ENCODE measurements at regions of chr4 and their contacts with region 1.

Region 1: DNA sequence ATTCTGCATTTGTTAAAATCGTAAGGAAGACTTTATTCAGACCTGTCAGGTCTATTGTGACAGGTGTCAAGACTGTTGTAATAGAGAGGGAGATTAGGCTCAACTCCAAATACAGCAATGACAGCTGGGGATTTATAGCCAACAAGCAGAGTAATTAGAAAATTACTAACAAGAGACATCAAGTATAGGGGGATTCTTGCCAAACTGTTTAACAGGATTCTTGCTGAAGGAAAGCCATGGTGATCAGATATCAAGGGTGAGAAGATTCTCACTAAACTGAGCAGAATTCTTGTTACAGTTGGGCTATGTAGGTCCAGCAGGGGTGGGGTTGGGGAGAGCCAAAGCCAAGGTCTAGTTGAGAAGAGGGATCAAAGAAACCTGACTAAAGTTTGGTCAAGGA is 461.0 kb upstream of the GALNT7 start:
- DNase-seq: no peak
- H3K4me3 ChIP-seq: no peak overlapping the region
- H3K27ac ChIP-seq: no peak overlapping the region
- H3K4me1 ChIP-seq: no peaks in the 10 kb centered on the region
- H3K27me3 ChIP-seq: no peaks in the 10 kb centered on the region
- CTCF ChIP-seq: no peak
- POLR2A ChIP-seq: no peak

Region 2: DNA sequence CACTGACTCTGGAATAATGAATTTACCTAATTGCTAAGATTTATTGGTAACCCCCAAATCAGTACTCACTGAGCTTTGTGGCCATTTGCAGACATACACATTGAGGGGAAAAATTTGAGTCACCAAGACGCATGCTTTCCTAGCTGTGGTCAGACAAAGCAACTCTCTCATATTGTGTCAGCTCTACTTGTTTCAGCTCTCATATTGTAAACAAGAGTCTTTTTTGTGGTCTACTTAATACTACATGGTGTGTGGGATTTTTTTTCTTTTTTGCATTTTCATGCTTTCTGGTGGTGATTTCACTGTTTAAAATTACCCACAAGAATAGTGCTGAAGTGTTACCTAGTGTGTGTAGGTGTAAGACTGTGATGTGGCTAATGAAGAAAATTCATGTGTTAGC is 32.8 kb after region 1 on chr4:
- intact Hi-C with region 1: loop called (anchors 2 kb)
- DNase-seq: no peak
- H3K4me3 ChIP-seq: no peak overlapping the region
- H3K27ac ChIP-seq: no peak overlapping the region
- H3K4me1 ChIP-seq: no peaks in the 10 kb centered on the region
- H3K27me3 ChIP-seq: no peaks in the 10 kb centered on the region
- CTCF ChIP-seq: no peak
- POLR2A ChIP-seq: no peak

Region 3: DNA sequence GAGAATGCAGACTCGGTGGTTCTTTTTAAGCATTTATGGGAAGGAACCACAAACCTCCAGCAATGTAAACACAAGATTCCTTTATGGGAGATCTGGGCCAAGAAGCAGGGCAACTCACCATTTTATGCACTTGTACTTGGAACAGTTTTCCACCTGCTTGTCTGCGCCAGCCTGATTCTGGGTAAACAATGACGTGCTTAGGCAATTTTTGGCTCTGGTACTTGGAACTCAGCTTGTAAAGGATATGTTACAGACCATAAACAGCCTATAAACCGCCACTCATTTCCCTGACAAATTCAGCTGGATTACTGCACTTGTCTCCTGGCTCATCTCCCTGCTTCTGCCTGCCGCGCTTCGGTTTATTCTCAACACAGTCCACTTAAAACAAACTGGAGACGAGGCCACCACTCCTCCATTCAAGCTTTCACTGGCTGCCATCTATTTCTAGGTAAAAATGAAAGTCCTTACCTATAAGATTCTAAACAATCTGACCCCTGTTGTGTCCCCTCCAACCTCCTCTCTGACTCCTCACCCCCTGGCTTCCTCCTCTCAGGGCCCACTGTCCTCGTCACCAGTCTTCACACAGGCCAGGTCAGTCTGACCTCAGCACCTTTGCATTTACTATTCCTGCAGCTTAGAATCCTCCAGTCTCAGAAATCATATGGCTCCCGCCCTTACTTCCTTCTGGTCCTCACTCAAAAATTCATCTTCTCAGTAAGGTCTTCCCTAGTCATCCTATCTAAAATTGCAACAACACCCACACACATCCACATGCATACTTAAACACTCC is 255.2 kb after region 1 on chr4:
- intact Hi-C with region 1: no loop called
- DNase-seq: peak; percentile 41 to 82
- H3K4me3 ChIP-seq: no peak overlapping the region
- H3K27ac ChIP-seq: peak overlapping the region; percentile 62 to 66
- H3K4me1 ChIP-seq: peaks cover 0 to 8% of the 10 kb centered on the region in 2 donors
- H3K27me3 ChIP-seq: no peaks in the 10 kb centered on the region
- CTCF ChIP-seq: no peak
- POLR2A ChIP-seq: no peak

Measured in uterus (tissue), 4 donors.